ENCODE measurements at regions of chr1 and their contacts with region 1.

Region 1: GRCh38 chr1:193537266-193538002 is 351.0 kb upstream of the B3GALT2 start:
- DNase-seq: peak; percentile 66
- H3K4me3 Mint-ChIP-seq: no peak overlapping the region
- H3K27ac Mint-ChIP-seq: peak overlapping the region; percentile 74
- H3K4me1 Mint-ChIP-seq: peaks cover 47% of the 10 kb centered on the region
- H3K27me3 Mint-ChIP-seq: no peaks in the 10 kb centered on the region

Region 2: DNA sequence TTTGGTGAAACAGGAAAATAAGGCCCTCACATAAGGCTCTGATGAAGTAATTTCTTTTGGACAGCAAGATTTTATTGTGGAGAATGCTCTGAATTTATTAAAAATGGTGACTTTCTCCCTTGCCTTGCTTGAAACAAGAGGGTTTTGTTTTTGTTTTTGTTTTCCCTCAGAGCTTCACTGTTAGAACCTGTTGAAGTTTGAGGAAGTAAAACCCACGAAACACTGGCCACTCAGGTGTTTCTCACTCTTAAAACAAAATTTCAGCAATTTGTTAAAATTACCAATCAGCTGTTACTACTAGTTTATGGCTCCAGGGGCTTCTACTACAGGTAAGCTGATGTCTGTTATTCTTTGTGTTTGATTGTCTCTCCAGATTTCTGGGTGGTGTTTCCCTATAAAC is 238.4 kb before region 1 on chr1:
- intact Hi-C with region 1: no loop called
- DNase-seq: no peak
- H3K4me3 Mint-ChIP-seq: no peak overlapping the region
- H3K27ac Mint-ChIP-seq: no peak overlapping the region
- H3K4me1 Mint-ChIP-seq: no peaks in the 10 kb centered on the region
- H3K27me3 Mint-ChIP-seq: peaks cover 2% of the 10 kb centered on the region

Region 3: GRCh38 chr1:193408782-193409293 is 128.6 kb before region 1 on chr1:
- intact Hi-C with region 1: loop called (anchors 1 kb)
- DNase-seq: no peak
- H3K4me3 Mint-ChIP-seq: no peak overlapping the region
- H3K27ac Mint-ChIP-seq: no peak overlapping the region
- H3K4me1 Mint-ChIP-seq: peaks cover 36% of the 10 kb centered on the region
- H3K27me3 Mint-ChIP-seq: no peaks in the 10 kb centered on the region

Region 4: DNA sequence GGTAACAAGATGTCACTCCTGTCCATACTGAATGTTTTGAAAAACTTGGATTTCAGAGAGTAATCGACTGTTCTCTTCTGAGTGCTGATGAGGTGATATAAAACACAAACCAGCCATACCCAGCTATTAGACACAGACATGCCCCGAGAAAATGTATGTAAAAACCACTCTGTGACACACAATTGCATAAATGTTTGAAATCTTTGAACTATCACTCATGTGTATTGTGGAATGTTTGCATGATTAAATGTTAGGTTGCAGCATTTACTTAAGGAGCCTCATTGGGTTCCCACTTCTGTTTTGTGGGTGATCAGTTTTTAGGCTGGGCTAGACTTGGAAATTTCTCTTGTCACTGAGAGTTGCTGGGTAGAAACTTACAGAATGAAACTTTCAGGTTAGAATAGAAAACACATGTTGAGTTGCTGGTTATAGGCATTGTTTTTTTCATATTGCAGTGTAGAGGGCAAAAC is 80.6 kb before region 1 on chr1:
- intact Hi-C with region 1: loop called (anchors 1 kb)
- DNase-seq: no peak
- H3K4me3 Mint-ChIP-seq: no peak overlapping the region
- H3K27ac Mint-ChIP-seq: no peak overlapping the region
- H3K4me1 Mint-ChIP-seq: peaks cover 25% of the 10 kb centered on the region
- H3K27me3 Mint-ChIP-seq: no peaks in the 10 kb centered on the region

Region 5: DNA sequence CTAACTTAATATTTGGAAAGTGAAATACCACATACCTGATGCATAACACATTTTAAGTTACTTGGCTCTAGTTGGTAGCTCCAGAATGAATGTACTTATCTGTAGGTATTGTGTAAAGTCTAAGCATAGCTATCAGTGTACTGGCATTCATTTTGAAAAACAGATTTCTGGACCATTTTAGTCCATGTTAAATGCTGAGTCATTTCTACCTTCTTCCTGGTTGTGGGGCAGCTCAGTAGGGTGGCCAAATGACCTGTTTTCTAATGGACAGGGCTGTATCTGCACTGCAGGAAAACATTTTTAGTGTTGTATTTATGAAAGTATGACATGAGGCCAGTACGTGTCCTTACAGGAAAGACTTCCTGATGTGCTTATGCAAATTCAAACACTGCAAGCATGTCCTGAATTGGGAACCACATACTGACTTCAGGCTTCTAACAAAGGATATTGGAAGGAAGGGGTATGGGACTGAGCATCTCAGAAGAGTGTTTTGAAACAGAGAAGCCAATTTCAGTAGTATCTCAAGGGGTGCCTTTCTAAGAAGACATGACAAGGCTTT is 50.7 kb before region 1 on chr1:
- intact Hi-C with region 1: no loop called
- DNase-seq: no peak
- H3K4me3 Mint-ChIP-seq: no peak overlapping the region
- H3K27ac Mint-ChIP-seq: no peak overlapping the region
- H3K4me1 Mint-ChIP-seq: peaks cover 18% of the 10 kb centered on the region
- H3K27me3 Mint-ChIP-seq: no peaks in the 10 kb centered on the region

Region 6: GRCh38 chr1:193516755-193517388 is 20.6 kb before region 1 on chr1:
- intact Hi-C with region 1: loop called (anchors 1 kb)
- DNase-seq: no peak
- H3K4me3 Mint-ChIP-seq: no peak overlapping the region
- H3K27ac Mint-ChIP-seq: peak overlapping the region; percentile 56
- H3K4me1 Mint-ChIP-seq: peaks cover 12% of the 10 kb centered on the region
- H3K27me3 Mint-ChIP-seq: no peaks in the 10 kb centered on the region

Region 7: DNA sequence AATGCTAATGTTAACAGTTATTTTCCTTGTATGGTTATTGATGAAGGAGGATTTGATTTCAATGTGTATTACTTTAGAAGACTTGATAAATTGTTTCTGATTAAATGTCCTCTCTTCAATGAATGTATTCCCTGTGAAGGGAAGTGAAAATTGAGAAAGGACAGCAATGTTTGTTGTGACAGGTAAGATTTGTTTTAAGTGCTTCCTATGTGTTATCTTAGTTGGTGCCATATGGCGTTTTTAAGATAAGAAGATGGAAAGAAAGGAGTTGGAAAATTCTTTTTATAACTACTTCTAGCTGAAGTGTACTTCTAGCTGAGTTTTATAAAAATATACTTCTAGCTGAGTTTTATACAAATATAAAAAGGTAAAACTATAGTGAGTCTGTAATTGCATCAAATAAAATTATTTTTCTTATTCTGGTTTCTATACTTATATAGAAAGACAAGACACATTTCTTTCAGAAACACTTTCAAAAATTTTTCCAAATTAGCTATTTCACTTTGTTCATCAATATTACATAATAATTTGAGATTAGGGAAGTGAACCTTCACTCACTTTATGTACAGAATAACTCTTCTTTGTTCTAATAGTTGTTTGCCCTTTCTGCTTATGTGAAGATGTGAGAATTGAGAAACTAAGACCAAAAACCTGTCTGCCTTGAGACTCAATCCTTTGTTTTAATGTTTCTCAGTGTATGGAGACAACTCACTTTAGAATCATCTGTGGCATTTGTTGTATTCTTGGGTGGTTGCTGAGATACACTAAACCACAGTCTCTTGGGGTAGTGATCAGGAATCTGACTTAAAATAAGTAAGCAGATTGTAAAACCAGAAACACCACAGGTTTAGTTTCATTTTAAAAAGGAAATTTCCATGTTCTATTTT is 31.9 kb after region 1 on chr1:
- intact Hi-C with region 1: loop called (anchors 1 kb)
- DNase-seq: no peak
- H3K4me3 Mint-ChIP-seq: no peak overlapping the region
- H3K27ac Mint-ChIP-seq: peak overlapping the region; percentile 77
- H3K4me1 Mint-ChIP-seq: peaks cover 33% of the 10 kb centered on the region
- H3K27me3 Mint-ChIP-seq: no peaks in the 10 kb centered on the region

Region 8: GRCh38 chr1:193614817-193615216 is 77.4 kb after region 1 on chr1:
- intact Hi-C with region 1: loop called (anchors 2 kb)
- DNase-seq: no peak
- H3K4me3 Mint-ChIP-seq: no peak overlapping the region
- H3K27ac Mint-ChIP-seq: no peak overlapping the region
- H3K4me1 Mint-ChIP-seq: peaks cover 4% of the 10 kb centered on the region
- H3K27me3 Mint-ChIP-seq: no peaks in the 10 kb centered on the region

Region 9: GRCh38 chr1:193700710-193701355 is 163.4 kb after region 1 on chr1:
- intact Hi-C with region 1: loop called (anchors 1 kb)
- DNase-seq: no peak
- H3K4me3 Mint-ChIP-seq: peak overlapping the region; percentile 5
- H3K27ac Mint-ChIP-seq: peak overlapping the region; percentile 72
- H3K4me1 Mint-ChIP-seq: peaks cover 38% of the 10 kb centered on the region
- H3K27me3 Mint-ChIP-seq: no peaks in the 10 kb centered on the region

Region 10: DNA sequence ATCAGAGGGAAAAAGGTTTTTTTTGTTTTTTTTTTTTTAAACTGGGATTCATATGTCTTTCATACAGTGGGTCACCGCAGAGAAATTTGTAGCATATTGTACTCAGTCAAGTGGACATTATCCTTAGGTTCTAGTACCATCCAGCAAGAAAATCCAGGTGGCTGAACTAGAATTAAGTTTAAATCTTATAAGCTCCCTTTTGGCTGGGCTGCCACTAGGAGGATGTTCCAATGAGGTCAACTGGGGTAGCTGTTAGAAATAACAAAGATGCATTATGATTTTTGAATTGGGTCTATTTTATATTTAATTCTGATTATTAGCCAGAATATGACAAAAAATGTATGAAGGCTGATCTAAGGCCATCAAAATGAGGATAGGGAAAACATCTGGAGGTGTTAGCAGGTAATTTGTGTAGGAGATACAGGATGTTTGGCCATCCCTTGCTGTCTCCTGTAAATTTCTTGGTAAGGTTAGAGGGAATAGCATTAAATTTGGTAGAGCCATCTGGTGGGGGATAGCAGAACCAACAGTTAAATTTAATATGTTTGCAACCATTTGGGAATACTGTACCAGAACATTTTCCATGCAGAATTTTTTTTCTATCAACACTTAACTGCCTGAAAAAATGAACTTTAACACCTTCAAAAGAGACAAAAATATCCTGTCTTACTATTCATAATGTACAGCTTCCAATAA is 217.4 kb after region 1 on chr1:
- intact Hi-C with region 1: no loop called
- DNase-seq: no peak
- H3K4me3 Mint-ChIP-seq: no peak overlapping the region
- H3K27ac Mint-ChIP-seq: no peak overlapping the region
- H3K4me1 Mint-ChIP-seq: no peaks in the 10 kb centered on the region
- H3K27me3 Mint-ChIP-seq: no peaks in the 10 kb centered on the region

Measured in activated T-helper 2 cell treated with anti-CD3 and anti-CD28 coated beads, Interferon-gamma antibody, Interleukin-2, Interleukin-4, amounts not matched to agents 10 μg/mL and 5 μg/mL and 100 μg/mL, durations not matched to agents 14 hours and 24 hours and 36 hours (primary cell).